HepG2 (cell line): ENCODE measurements at regions of chr6 and their contacts with region 1.

Region 1: GRCh38 chr6:53171605-53172446 is 23.2 kb upstream of the GCM1 start:
- DNase-seq: peak; percentile 76
- ATAC-seq: peak; percentile 93
- H3K4me3 ChIP-seq: no peak overlapping the region
- H3K27ac ChIP-seq: no peak overlapping the region
- H3K4me1 ChIP-seq: no peaks in the 10 kb centered on the region
- H3K27me3 ChIP-seq: no peaks in the 10 kb centered on the region
- CTCF ChIP-seq: peak; percentile 100
- EP300 ChIP-seq: no peak
- POLR2A ChIP-seq: no peak
- RAD21 ChIP-seq: peak; percentile 100

Region 2: GRCh38 chr6:53294095-53294494 is 122.3 kb after region 1 on chr6:
- CTCF ChIA-PET with region 1: interaction called, 14 read pairs
- POLR2A ChIA-PET with region 1: no interaction called
- in situ Hi-C with region 1: loop called (anchors 10 kb)
- intact Hi-C with region 1: loop called (anchors 1 kb)
- DNase-seq: peak; percentile 31
- ATAC-seq: peak; percentile 69
- H3K4me3 ChIP-seq: no peak overlapping the region
- H3K27ac ChIP-seq: no peak overlapping the region
- H3K4me1 ChIP-seq: peaks cover 14% of the 10 kb centered on the region
- H3K27me3 ChIP-seq: no peaks in the 10 kb centered on the region
- CTCF ChIP-seq: peak; percentile 71
- EP300 ChIP-seq: no peak
- POLR2A ChIP-seq: no peak
- RAD21 ChIP-seq: no peak

Region 3: DNA sequence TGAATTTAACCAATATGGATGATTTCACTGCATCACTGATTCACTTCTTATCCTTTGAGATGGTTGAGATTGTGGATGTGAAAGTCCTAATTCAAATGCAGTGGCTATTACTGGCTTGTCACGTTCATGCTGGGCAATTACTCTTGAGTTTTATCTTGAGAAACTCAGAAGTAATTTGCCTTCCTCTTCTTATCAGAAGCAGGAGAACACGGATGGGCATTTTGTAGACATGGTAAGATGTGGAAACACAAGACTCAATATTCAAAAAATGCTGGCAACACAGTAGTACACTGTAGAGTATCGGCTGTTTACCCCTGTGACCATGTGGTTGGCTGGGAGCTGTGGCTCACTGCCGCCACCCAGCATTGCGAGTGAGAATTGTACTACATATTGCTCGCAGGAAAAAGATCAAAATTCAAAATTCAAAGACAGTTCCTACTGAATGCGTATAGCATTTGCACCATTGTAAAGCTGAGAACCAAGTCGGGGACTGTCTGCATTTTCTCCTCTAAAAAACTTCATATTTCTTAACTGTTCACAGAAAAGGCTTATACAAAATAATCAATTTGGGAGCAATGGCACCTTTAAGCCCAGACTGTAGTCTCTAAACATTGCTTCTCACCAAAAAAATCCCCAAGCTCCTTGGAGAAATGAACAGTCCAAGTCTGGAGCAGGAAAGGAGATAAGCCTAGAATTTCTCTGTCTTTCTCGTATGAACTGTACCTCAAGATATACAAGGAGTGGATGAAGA is 238.9 kb after region 1 on chr6:
- CTCF ChIA-PET with region 1: interaction called, 108 read pairs
- POLR2A ChIA-PET with region 1: no interaction called
- in situ Hi-C with region 1: no loop called
- intact Hi-C with region 1: loop called (anchors 1 kb)
- DNase-seq: peak; percentile 56
- ATAC-seq: peak; percentile 100
- H3K4me3 ChIP-seq: no peak overlapping the region
- H3K27ac ChIP-seq: no peak overlapping the region
- H3K4me1 ChIP-seq: peaks cover 4% of the 10 kb centered on the region; the same call in 1 of the 2 replicates
- H3K27me3 ChIP-seq: peaks cover 0 to 4% of the 10 kb centered on the region in 2 experiments; a peak in 1 of 5 replicates
- CTCF ChIP-seq: peak; percentile 96
- EP300 ChIP-seq: no peak
- POLR2A ChIP-seq: no peak
- RAD21 ChIP-seq: peak; percentile 94

Region 4: GRCh38 chr6:53437557-53438202 is 265.9 kb after region 1 on chr6:
- CTCF ChIA-PET with region 1: interaction called, 152 read pairs
- POLR2A ChIA-PET with region 1: interaction called, 3 read pairs
- in situ Hi-C with region 1: loop called (anchors 5 kb)
- intact Hi-C with region 1: loop called (anchors 1 kb)
- DNase-seq: peak; percentile 71
- ATAC-seq: peak; percentile 79
- H3K4me3 ChIP-seq: no peak overlapping the region
- H3K27ac ChIP-seq: no peak overlapping the region
- H3K4me1 ChIP-seq: peaks cover 27% of the 10 kb centered on the region
- H3K27me3 ChIP-seq: 0 out of 5 replicates have a peak, but pooled peaks cover 0 to 5% of the 10 kb centered on the region in 2 experiments
- CTCF ChIP-seq: peak; percentile 88
- EP300 ChIP-seq: no peak
- POLR2A ChIP-seq: no peak
- RAD21 ChIP-seq: peak; percentile 90

Region 5: DNA sequence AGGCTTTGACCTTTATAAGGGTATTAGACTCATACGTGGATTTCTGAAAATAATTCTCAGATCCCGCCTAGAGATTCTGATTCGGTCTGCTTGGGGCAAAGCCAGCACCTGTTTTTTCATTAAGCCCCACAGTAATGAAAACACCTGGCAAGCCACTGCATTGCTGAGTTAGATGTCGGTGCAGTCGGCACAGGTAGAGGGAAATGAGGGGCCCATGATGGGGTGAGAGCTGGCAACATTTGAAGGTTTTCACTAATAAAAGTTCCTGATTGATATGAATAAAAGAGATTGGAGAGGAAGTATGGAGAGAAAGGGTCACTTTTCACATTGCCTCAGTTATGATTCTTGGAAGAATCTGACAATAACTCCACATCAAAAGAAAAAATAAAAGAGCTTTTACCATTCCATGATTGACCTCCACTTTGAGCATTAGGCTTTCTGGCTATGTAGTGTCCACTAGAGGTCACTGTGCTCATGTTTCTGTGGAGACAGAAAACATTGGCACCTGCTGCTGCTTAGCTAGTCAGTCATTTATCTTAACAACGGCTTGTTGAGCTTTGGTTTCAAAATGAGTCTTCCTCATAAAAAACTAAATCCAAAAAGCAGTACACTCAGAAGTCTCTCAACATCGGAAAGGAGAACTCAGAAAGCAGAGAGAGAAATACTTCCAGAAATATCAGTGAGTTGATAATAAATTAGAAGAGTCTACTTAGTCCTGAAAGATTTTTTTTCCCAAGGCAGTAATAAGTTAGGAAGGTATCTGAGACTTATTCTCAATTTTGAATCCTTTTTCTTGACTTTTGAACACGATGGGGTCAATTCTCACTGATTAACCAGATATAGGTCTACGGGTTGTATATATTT is 547.0 kb after region 1 on chr6:
- CTCF ChIA-PET with region 1: no interaction called
- POLR2A ChIA-PET with region 1: no interaction called
- in situ Hi-C with region 1: loop called (anchors 25 kb)
- intact Hi-C with region 1: no loop called
- DNase-seq: peak; percentile 72
- ATAC-seq: peak; percentile 89
- H3K4me3 ChIP-seq: no peak overlapping the region
- H3K27ac ChIP-seq: no peak overlapping the region
- H3K4me1 ChIP-seq: peaks cover 22% of the 10 kb centered on the region
- H3K27me3 ChIP-seq: no peaks in the 10 kb centered on the region; a peak in 1 of 5 replicates
- CTCF ChIP-seq: peak; percentile 88
- EP300 ChIP-seq: no peak
- POLR2A ChIP-seq: no peak
- RAD21 ChIP-seq: no peak